ENCODE measurements at regions of chr3 and their contacts with region 1.

Region 1: GRCh38 chr3:144557515-144557914 is 585.9 kb downstream of the DIPK2A start:
- DNase-seq: no peak
- H3K4me3 ChIP-seq: no peak overlapping the region
- H3K27ac ChIP-seq: no peak overlapping the region
- H3K4me1 ChIP-seq: no peaks in the 10 kb centered on the region
- H3K27me3 ChIP-seq: no peaks in the 10 kb centered on the region
- CTCF ChIP-seq: no peak

Region 2: DNA sequence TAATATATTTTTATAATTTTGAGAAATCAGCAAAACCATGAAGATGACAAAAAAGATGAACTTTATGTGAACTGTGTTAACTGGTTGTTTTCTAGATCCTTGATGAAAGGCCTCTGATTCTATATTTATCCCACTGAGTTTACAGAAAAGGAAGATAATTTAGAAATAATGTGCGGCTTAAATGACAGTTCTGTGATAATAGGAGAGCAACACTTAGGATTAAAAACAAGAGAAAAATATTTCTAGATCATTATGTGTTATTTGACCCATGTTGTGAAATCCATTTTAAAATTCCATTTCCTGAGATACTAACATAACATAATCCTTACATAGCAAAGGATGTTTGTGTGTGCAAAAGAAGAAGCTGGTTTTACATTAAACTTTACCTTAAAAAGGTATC is 12.1 kb after region 1 on chr3:
- CTCF ChIA-PET with region 1: no interaction called
- POLR2A ChIA-PET with region 1: no interaction called
- intact Hi-C with region 1: no loop called
- DNase-seq: no peak
- H3K4me3 ChIP-seq: no peak overlapping the region
- H3K27ac ChIP-seq: no peak overlapping the region
- H3K4me1 ChIP-seq: no peaks in the 10 kb centered on the region
- H3K27me3 ChIP-seq: no peaks in the 10 kb centered on the region
- CTCF ChIP-seq: no peak

Region 3: GRCh38 chr3:144687855-144688254 is 130.3 kb after region 1 on chr3:
- CTCF ChIA-PET with region 1: no interaction called
- POLR2A ChIA-PET with region 1: no interaction called
- intact Hi-C with region 1: no loop called
- DNase-seq: no peak
- H3K4me3 ChIP-seq: no peak overlapping the region
- H3K27ac ChIP-seq: no peak overlapping the region
- H3K4me1 ChIP-seq: no peaks in the 10 kb centered on the region
- H3K27me3 ChIP-seq: no peaks in the 10 kb centered on the region
- CTCF ChIP-seq: no peak

Region 4: DNA sequence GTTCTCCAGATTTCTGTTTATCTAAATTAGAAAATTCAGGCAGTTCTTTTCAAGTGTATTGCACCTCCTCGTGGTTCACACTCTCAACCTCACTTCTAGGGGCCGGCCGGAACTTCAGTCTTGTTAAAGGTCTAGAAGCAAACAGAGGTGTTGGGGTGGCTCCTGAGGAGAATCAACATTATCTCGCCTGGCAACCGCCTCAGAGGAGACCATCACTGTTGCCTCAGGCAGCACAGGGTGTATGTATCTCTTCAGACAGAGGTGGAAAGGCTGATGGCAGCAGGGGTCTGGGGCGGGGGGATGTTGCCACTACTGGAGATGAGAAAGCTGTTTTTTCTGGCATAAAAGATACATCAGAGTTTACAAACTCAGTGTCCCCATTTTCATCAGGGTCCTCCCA is 672.1 kb after region 1 on chr3:
- CTCF ChIA-PET with region 1: no interaction called
- POLR2A ChIA-PET with region 1: interaction called, 13 read pairs
- intact Hi-C with region 1: no loop called
- DNase-seq: no peak
- H3K4me3 ChIP-seq: no peak overlapping the region
- H3K27ac ChIP-seq: no peak overlapping the region
- H3K4me1 ChIP-seq: no peaks in the 10 kb centered on the region
- H3K27me3 ChIP-seq: no peaks in the 10 kb centered on the region
- CTCF ChIP-seq: no peak

Region 5: GRCh38 chr3:146256851-146257486 is 1699.5 kb after region 1 on chr3:
- CTCF ChIA-PET with region 1: interaction called, 18 read pairs
- POLR2A ChIA-PET with region 1: no interaction called
- intact Hi-C with region 1: no loop called
- DNase-seq: no peak
- H3K4me3 ChIP-seq: no peak overlapping the region
- H3K27ac ChIP-seq: no peak overlapping the region
- H3K4me1 ChIP-seq: no peaks in the 10 kb centered on the region
- H3K27me3 ChIP-seq: no peaks in the 10 kb centered on the region
- CTCF ChIP-seq: no peak

Measured in PC-9 (cell line).